WTC11 (cell line): ENCODE measurements at regions of chr2 and their contacts with region 1.

Region 1: GRCh38 chr2:11583840-11584524 is 50.1 kb downstream of the GREB1 start:
- DNase-seq: peak; percentile 78
- ATAC-seq: peak; percentile 49
- H3K4me3 Mint-ChIP-seq: no peak overlapping the region
- H3K27ac Mint-ChIP-seq: peak overlapping the region; percentile 89
- H3K4me1 Mint-ChIP-seq: peaks cover 22% of the 10 kb centered on the region
- H3K27me3 Mint-ChIP-seq: no peaks in the 10 kb centered on the region
- CTCF ChIP-seq: peak; percentile 80

Region 2: DNA sequence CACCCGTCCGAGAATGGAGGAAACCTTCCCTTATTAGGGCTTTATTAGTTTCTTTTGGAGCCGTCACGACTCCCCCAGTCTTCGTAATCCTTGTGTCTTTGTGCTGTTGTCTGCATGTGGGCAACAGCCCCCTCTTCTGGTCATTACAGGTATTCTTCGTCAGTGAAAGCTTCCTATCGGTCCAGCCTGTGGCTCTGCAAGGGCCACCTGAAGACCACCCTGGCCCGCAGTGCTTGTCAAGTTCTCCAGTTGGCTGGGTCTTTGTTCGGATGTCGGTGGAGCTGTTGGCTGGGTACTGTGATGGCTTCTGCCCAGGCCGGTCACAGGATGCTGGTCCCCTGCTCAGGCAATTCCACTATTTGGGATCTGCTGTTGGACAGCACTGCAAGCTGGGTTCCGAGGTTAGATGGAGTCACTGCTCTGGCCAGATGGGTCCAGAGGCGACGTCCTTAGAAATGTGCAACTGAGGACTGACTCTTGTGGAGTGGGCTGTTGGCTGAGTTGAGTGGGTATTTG is 137.2 kb before region 1 on chr2:
- CTCF ChIA-PET with region 1: interaction called, 18 read pairs
- POLR2A ChIA-PET with region 1: no interaction called
- DNase-seq: peak; percentile 73
- ATAC-seq: peak; percentile 98
- H3K4me3 Mint-ChIP-seq: no peak overlapping the region
- H3K27ac Mint-ChIP-seq: no peak overlapping the region
- H3K4me1 Mint-ChIP-seq: no peaks in the 10 kb centered on the region
- H3K27me3 Mint-ChIP-seq: no peaks in the 10 kb centered on the region
- CTCF ChIP-seq: peak; percentile 83

Region 3: DNA sequence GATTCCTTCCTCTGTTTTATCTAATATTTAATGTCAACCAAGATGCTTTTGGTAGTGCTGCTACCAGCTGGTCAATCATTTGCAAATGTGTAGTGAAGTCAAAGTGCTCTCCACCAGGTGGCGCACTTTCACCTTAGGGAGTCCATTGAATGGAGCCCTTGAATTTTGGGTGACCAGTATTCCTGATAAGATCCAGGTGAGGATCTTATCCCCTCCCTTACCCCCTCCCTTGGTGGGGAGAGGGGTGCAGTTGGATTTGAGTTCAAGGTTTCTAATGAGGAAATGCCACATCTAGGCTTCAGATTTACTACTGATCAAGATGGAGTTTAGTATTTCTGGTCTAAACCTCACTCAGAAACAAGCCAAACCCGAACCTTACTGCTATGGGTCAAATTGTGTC is 106.0 kb before region 1 on chr2:
- CTCF ChIA-PET with region 1: interaction called, 229 read pairs
- POLR2A ChIA-PET with region 1: interaction called, 3 read pairs
- DNase-seq: peak; percentile 96
- ATAC-seq: peak; percentile 10; the same call in 1 of the 2 replicates
- H3K4me3 Mint-ChIP-seq: no peak overlapping the region
- H3K27ac Mint-ChIP-seq: no peak overlapping the region
- H3K4me1 Mint-ChIP-seq: peaks cover 13% of the 10 kb centered on the region
- H3K27me3 Mint-ChIP-seq: peaks cover 20% of the 10 kb centered on the region
- CTCF ChIP-seq: peak; percentile 84

Region 4: DNA sequence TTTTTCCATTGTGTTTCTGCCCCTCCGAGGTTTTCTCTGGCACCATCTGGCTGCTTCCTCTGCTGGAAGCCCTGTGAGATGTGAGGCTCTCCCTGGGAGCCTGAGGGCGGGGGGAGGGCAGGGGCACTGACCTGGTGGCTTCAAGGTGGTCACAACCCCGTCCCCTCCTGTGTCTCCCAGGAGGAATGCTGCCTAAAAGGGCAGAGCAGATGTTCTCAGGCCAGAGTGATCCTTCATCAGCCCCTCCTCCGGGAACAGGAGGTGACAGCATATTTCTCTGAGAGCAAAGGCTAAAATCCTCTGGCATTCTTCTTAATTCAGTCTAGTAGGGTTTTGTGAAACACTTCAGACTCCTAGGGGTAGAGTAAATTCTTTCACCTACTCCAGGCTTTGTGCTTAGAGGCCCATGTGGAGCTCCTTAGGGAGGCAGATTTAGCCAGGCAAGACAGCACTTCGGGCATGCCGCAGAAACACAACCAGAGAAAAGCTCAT is 68.4 kb before region 1 on chr2:
- CTCF ChIA-PET with region 1: interaction called, 10 read pairs
- POLR2A ChIA-PET with region 1: no interaction called
- DNase-seq: no peak
- ATAC-seq: peak; percentile 27; the same call in 1 of the 2 replicates
- H3K4me3 Mint-ChIP-seq: no peak overlapping the region
- H3K27ac Mint-ChIP-seq: no peak overlapping the region
- H3K4me1 Mint-ChIP-seq: peaks cover 62% of the 10 kb centered on the region
- H3K27me3 Mint-ChIP-seq: no peaks in the 10 kb centered on the region
- CTCF ChIP-seq: no peak

Region 5: DNA sequence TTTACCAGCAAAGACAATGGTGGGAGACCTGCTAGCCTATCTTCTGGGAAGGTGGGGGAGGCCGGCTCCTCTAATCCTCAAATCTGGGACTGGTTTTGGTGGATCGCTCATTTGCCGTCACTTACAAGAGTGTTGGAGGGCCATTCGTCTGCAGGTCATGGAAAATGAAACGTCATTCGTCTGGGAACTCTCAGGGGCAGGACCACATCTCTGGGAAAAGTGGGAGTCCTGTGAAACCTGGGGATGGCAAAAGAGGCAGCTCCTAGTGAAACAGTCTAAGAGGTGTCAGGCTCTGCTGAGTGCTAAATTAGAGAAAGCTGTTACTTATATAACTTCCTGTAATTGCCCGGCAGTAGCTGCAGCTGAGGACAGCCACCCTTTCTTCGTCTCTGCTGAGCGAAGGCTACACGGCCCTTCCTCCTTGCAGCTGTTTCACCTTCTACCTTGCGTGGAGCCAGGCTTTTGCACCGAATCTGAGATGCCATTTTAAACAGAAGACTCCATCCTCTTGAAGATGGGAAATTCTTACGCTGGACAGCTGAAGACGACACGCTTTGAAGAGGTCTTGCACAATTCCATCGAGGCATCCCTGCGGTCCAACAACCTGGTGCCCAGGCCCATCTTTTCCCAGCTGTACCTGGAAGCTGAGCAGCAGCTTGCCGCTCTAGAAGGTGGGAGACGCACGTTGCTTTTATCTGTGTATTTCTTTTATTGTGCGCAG is 27.7 kb before region 1 on chr2:
- CTCF ChIA-PET with region 1: interaction called, 35 read pairs
- POLR2A ChIA-PET with region 1: no interaction called
- DNase-seq: no peak
- ATAC-seq: no peak; the same call in 1 of the 2 replicates
- H3K4me3 Mint-ChIP-seq: no peak overlapping the region
- H3K27ac Mint-ChIP-seq: no peak overlapping the region
- H3K4me1 Mint-ChIP-seq: peaks cover 60% of the 10 kb centered on the region
- H3K27me3 Mint-ChIP-seq: no peaks in the 10 kb centered on the region
- CTCF ChIP-seq: no peak

Region 6: DNA sequence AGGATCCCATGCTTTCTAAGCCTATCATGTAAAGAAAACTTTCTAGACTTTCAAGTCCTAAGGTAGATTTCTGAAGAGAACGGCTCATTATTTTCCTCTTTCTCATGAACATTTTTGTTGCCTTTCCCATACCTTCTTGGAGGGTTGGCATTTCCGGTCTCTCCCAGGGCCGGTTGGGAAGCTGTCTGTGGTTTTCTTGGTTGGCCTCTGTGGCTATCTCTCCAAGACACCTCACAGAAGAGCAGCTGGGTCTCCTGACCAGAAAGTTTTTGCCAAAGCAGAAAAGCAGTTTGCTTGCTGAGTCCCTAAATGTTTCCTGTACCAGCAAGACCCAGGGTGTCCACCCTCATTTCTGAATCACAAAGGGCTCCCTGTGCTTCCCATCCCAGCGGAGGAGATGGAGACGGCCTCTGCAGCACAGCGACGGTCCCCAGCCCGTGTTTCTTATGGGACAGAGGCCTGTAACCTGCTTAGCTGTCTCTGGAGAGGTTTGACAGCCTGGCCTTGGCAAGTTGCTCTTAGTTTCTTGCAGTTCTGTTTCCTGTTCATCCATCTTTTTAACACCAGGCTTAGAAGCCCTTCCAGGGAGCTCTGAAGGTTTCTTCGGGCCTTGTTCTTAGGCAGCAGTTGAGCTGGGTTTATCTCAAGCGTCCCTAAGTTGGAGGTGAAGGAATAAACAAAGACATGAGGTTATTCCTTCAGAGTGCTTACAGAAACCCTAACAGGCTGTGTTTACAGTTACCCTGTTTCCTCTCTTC is 10.4 kb before region 1 on chr2:
- CTCF ChIA-PET with region 1: interaction called, 17 read pairs
- POLR2A ChIA-PET with region 1: no interaction called
- DNase-seq: peak; percentile 43
- ATAC-seq: peak; percentile 84
- H3K4me3 Mint-ChIP-seq: no peak overlapping the region
- H3K27ac Mint-ChIP-seq: peak overlapping the region; percentile 86
- H3K4me1 Mint-ChIP-seq: peaks cover 41% of the 10 kb centered on the region
- H3K27me3 Mint-ChIP-seq: no peaks in the 10 kb centered on the region
- CTCF ChIP-seq: no peak

Region 7: DNA sequence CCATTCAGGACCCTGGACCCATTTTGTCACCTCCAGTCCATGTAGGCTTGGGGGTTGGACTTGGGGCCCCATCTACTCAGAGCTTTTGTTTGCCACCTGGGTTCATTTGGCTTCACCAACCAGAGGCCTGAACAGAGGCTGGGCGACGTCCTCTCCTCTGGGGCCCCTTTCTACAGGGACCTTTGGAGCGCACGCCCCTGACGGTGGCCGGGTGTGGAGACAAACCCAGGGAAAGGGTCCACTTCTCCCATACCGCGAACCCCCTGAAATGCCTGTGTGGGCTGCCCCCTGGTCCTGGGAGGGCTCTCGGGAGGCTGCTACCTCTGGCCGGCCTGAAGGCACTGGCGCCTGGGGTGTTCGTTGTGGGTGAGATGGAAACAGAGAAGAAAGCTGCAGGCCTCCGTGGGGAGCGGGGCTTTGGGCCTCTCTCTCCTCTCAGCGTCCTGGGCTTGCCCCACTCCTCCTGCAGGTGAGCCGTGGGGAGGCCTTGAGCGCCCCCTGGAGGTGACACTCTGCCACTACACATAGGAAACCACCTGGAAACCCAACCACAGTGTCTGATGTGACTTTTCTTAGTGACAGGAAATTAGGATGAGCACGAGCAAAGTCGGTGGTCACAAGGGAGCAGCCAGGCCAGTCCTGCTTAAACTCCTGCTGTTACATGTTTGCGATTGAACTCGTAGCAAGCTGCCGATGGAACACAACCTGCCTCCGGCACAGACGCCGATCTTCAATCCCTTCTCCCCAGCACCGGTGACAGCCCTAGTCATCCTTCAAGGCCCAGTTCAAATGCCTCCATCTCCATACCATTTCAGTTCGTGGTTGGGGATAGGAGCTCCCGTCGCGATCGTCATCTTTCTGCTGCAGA is 98.0 kb after region 1 on chr2:
- CTCF ChIA-PET with region 1: interaction called, 10 read pairs
- POLR2A ChIA-PET with region 1: no interaction called
- DNase-seq: peak; percentile 84
- ATAC-seq: peak; percentile 65
- H3K4me3 Mint-ChIP-seq: no peak overlapping the region
- H3K27ac Mint-ChIP-seq: no peak overlapping the region; the same call in 1 of the 2 replicates
- H3K4me1 Mint-ChIP-seq: peaks cover 53% of the 10 kb centered on the region
- H3K27me3 Mint-ChIP-seq: no peaks in the 10 kb centered on the region
- CTCF ChIP-seq: peak; percentile 100